ENCODE measurements at regions of chr17 and their contacts with region 1.

Region 1: GRCh38 chr17:30124273-30124796 is 7.7 kb downstream of the NSRP1 start:
- DNase-seq: no peak
- ATAC-seq: no peak
- H3K4me3 ChIP-seq: no peak overlapping the region
- H3K27ac ChIP-seq: no peak overlapping the region
- H3K4me1 ChIP-seq: no peaks in the 10 kb centered on the region
- H3K27me3 ChIP-seq: no peaks in the 10 kb centered on the region
- CTCF ChIP-seq: no peak

Region 2: GRCh38 chr17:29844339-29845048 is 279.8 kb before region 1 on chr17:
- CTCF ChIA-PET with region 1: no interaction called
- POLR2A ChIA-PET with region 1: no interaction called
- intact Hi-C with region 1: no loop called
- DNase-seq: no peak
- ATAC-seq: no peak
- H3K4me3 ChIP-seq: no peak overlapping the region
- H3K27ac ChIP-seq: no peak overlapping the region
- H3K4me1 ChIP-seq: no peaks in the 10 kb centered on the region
- H3K27me3 ChIP-seq: no peaks in the 10 kb centered on the region
- CTCF ChIP-seq: no peak

Region 3: GRCh38 chr17:30200106-30200505 is 75.8 kb after region 1 on chr17:
- CTCF ChIA-PET with region 1: no interaction called
- POLR2A ChIA-PET with region 1: no interaction called
- intact Hi-C with region 1: no loop called
- DNase-seq: no peak
- ATAC-seq: no peak
- H3K4me3 ChIP-seq: no peak overlapping the region
- H3K27ac ChIP-seq: no peak overlapping the region
- H3K4me1 ChIP-seq: no peaks in the 10 kb centered on the region
- H3K27me3 ChIP-seq: no peaks in the 10 kb centered on the region
- CTCF ChIP-seq: no peak

Region 4: GRCh38 chr17:30236766-30237165 is 112.4 kb after region 1 on chr17:
- CTCF ChIA-PET with region 1: interaction called, 4 read pairs
- POLR2A ChIA-PET with region 1: no interaction called
- intact Hi-C with region 1: loop called (anchors 1 kb)
- DNase-seq: peak; percentile 39
- ATAC-seq: peak; percentile 83
- H3K4me3 ChIP-seq: no peak overlapping the region
- H3K27ac ChIP-seq: no peak overlapping the region
- H3K4me1 ChIP-seq: no peaks in the 10 kb centered on the region
- H3K27me3 ChIP-seq: peaks cover 40% of the 10 kb centered on the region
- CTCF ChIP-seq: peak; percentile 38

Region 5: GRCh38 chr17:30554839-30555751 is 430.8 kb after region 1 on chr17:
- CTCF ChIA-PET with region 1: interaction called, 14 read pairs
- POLR2A ChIA-PET with region 1: no interaction called
- intact Hi-C with region 1: no loop called
- DNase-seq: peak; percentile 34
- ATAC-seq: no peak
- H3K4me3 ChIP-seq: no peak overlapping the region
- H3K27ac ChIP-seq: no peak overlapping the region
- H3K4me1 ChIP-seq: peaks cover 10% of the 10 kb centered on the region
- H3K27me3 ChIP-seq: no peaks in the 10 kb centered on the region
- CTCF ChIP-seq: peak; percentile 42; the same call in 1 of the 2 replicates